ENCODE measurements at regions of chr4 and their contacts with region 1.

Region 1: DNA sequence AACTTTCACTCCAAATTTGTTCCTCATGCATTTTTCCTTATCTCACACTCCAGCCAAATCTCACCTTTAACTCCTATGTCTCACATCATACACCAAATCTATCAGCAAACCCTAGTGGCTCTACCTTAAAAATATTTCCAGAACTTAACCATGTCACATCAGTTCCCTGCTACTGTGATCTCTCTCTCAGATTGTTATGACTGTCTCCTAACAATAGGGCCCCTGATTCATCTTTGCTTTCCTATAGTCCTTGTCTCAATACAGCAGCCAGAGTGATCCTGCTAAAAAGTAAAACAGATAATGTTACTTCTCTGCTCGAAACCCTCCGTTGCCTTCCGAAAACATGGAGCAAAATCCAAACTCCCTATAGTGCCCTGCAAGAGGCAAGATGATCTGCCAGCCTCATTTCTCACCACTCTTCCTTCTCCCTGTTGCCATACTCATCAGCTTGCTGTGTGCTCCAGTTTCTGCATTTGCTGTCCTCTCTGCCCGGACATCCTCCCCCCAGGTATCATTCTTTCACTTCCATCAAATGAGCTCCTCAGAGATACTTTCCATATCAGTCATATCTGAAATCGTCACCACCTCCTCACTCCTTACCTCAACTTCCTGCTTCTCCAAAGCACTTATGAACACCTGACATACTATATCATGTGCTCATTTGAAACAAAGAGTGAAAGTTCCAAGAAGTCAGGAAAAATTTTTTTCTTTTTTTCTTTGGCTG is 293.4 kb upstream of the NR3C2 start:
- DNase-seq: peak; percentile 42
- ATAC-seq: peak; percentile 94
- H3K4me3 Mint-ChIP-seq: no peak overlapping the region
- H3K27ac Mint-ChIP-seq: no peak overlapping the region
- H3K4me1 Mint-ChIP-seq: no peaks in the 10 kb centered on the region
- H3K27me3 Mint-ChIP-seq: peaks cover 6% of the 10 kb centered on the region

Region 2: DNA sequence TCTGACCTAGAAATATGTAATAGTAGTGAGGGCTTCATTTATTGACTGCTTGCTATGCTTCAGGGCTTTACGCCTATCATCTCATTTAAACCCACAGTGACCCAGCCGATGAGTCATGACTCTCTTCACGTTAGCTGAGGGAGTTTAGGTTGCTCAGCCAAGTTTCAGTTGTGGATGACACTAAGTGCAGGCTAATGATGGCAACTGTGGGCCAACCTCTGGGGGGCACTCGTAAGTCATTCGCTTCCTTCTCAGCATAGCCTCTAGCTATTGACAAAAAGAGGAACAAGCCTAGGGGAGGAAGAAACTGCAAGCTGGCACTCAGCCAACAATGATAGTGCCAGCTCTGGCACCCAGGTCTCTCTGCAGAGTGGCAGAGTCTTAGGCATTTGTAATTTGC is 678.7 kb before region 1 on chr4:
- CTCF ChIA-PET with region 1: no interaction called
- POLR2A ChIA-PET with region 1: no interaction called
- intact Hi-C with region 1: loop called in 1 of 2 experiments (anchors 10 kb)
- DNase-seq: peak; percentile 83
- ATAC-seq: peak; percentile 85
- H3K4me3 Mint-ChIP-seq: no peak overlapping the region
- H3K27ac Mint-ChIP-seq: no peak overlapping the region
- H3K4me1 Mint-ChIP-seq: peaks cover 92% of the 10 kb centered on the region
- H3K27me3 Mint-ChIP-seq: no peaks in the 10 kb centered on the region